Endothelial cell of umbilical vein (primary cell): ENCODE measurements at regions of chr12 and their contacts with region 1.

Region 1: GRCh38 chr12:57846577-57847319 is at the start of gene CTDSP2:
- DNase-seq: peak; percentile 96
- H3K4me3 ChIP-seq: peak within 1 kb of the TSS; percentile 88 to 100 (median 93)
- H3K27ac ChIP-seq: peak within 1 kb of the TSS; percentile 85
- H3K4me1 ChIP-seq: peaks cover 27% of the 10 kb centered on the region
- H3K27me3 ChIP-seq: peaks cover 9% of the 10 kb centered on the region in 2 experiments
- CTCF ChIP-seq: no peak
- POLR2A ChIP-seq: peak; percentile 52
- total RNA-seq, gene CTDSP2: 128 and 142 TPM in 2 replicates

Region 2: GRCh38 chr12:57771708-57772428 is 74.9 kb before region 1 on chr12 and contains the start of gene METTL1:
- CTCF ChIA-PET with region 1: no interaction called
- POLR2A ChIA-PET with region 1: no interaction called
- dilution Hi-C with region 1: no loop called
- intact Hi-C with region 1: loop called (anchors 1 kb)
- DNase-seq: peak; percentile 98
- H3K4me3 ChIP-seq: peak within 1 kb of the TSS; percentile 69 to 79 (median 76)
- H3K27ac ChIP-seq: peak within 1 kb of the TSS; percentile 79
- H3K4me1 ChIP-seq: peaks cover 13% of the 10 kb centered on the region
- H3K27me3 ChIP-seq: peaks cover under 1 to 5% of the 10 kb centered on the region in 2 experiments
- CTCF ChIP-seq: no peak
- POLR2A ChIP-seq: peak; percentile 75
- total RNA-seq, gene METTL1: 24.3 and 24.8 TPM in 2 replicates

Region 3: GRCh38 chr12:57865090-57865751 is 18.5 kb after region 1 on chr12:
- CTCF ChIA-PET with region 1: interaction called, 17 read pairs
- POLR2A ChIA-PET with region 1: interaction called, 12 read pairs
- dilution Hi-C with region 1: no loop called
- intact Hi-C with region 1: loop called (anchors 1 kb)
- DNase-seq: peak; percentile 81
- H3K4me3 ChIP-seq: peak overlapping the region; percentile 19 to 51 (median 38)
- H3K27ac ChIP-seq: peak overlapping the region; percentile 82
- H3K4me1 ChIP-seq: peaks cover 8% of the 10 kb centered on the region
- H3K27me3 ChIP-seq: no peaks in the 10 kb centered on the region
- CTCF ChIP-seq: no peak
- POLR2A ChIP-seq: peak; percentile 75

Region 4: DNA sequence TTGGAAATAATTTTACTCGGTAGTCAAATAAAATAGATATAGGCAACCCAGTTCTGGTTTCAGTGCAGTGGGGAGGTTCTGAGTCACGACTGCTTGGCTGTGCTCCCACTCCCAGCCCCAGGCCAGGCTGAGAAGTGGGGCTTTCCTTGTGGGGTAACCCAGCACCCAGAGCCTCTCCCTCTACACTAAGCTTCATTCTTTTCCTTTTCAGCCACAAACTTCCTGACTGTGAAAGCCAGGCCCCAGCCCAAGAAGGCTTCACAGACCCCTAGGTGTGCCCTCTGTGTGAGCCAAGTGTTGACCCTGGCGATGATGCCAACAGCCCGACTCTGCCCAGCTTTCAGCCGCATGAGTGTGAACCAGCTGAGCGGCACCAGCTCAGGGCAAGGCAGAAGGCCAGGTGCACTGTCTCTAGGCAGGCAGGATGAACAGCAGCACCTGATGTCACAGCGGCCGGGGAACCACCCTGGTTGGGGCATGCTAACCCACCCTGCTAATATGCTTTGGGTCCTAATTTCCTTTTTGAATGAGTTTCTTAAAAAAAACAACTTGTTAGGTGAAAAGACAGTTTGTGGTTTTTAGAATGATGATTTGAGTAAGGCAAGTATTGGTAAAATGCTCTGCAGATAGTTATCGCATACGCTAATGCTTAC is 52.4 kb after region 1 on chr12:
- CTCF ChIA-PET with region 1: interaction called, 27 read pairs
- POLR2A ChIA-PET with region 1: interaction called, 18 read pairs
- dilution Hi-C with region 1: no loop called
- intact Hi-C with region 1: no loop called
- DNase-seq: peak; percentile 59
- H3K4me3 ChIP-seq: no peak overlapping the region
- H3K27ac ChIP-seq: no peak overlapping the region
- H3K4me1 ChIP-seq: peaks cover 28% of the 10 kb centered on the region
- H3K27me3 ChIP-seq: no peaks in the 10 kb centered on the region
- CTCF ChIP-seq: no peak
- POLR2A ChIP-seq: no peak

Region 5: DNA sequence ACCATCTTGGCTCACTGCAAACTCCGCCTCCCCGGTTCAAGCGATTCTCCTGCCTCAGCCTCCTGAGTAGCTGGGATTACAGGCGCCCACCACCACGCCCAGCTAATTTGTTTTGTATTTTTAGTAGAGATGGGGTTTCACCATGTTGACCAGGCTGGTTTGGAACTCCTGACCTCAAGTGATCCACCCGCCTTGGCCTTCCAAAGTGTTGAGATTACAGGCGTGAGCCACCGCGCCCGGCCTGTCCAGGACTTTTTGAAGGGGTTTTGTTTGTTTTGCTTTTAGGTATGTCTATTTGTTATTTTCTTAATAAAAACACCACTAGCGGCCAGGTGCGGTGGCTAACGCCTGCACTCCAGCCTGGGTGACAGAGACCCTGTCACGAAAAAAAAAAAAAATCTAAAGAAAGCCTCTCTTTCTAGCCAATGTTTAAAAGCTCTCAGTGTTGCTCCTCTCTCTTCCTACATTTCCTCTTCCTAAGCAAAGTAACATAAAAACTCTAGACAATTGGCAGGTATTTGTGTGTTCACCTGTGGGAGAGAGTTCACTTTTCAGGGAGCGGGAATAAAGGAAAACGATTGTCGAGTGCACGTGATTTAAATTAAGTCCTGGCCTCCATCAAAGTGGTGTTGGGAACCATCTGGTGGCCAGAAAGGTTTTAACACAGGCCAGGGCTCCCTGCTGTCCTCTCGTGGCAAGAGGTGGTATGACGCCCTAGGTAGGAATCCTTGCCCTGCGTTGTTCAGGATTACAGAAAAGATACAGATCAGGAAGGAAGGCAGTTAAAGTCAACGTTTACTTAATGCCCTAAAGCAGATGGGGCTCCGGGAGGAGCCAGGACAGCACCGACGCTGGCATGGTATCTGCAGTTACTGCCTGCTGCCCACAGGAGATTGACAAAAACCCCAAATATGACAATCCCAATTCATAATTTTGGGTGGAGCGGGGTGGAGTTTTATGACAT is 58.4 kb after region 1 on chr12:
- CTCF ChIA-PET with region 1: interaction called, 21 read pairs
- POLR2A ChIA-PET with region 1: interaction called, 4 read pairs
- dilution Hi-C with region 1: no loop called
- intact Hi-C with region 1: loop called (anchors 1 kb)
- DNase-seq: peak; percentile 92
- H3K4me3 ChIP-seq: no peak overlapping the region
- H3K27ac ChIP-seq: no peak overlapping the region
- H3K4me1 ChIP-seq: peaks cover 2% of the 10 kb centered on the region
- H3K27me3 ChIP-seq: peaks cover 12 to 14% of the 10 kb centered on the region in 2 experiments
- CTCF ChIP-seq: peak; percentile 100
- POLR2A ChIP-seq: no peak